HEK293 (cell line): ENCODE measurements at regions of chr11 and their contacts with region 1.

Region 1: GRCh38 chr11:9460322-9461067 is at the start of gene ZNF143:
- H3K4me3 ChIP-seq: peak within 1 kb of the TSS; percentile 93
- H3K27ac ChIP-seq: peak within 1 kb of the TSS; percentile 88
- H3K4me1 ChIP-seq: no peaks in the 10 kb centered on the region
- CTCF ChIP-seq: no peak

Region 2: GRCh38 chr11:9473408-9473807 is 12.9 kb after region 1 on chr11:
- CTCF ChIA-PET with region 1: interaction called, 4 read pairs
- POLR2A ChIA-PET with region 1: interaction called, 29 read pairs
- H3K4me3 ChIP-seq: no peak overlapping the region
- H3K27ac ChIP-seq: no peak overlapping the region
- H3K4me1 ChIP-seq: no peaks in the 10 kb centered on the region
- CTCF ChIP-seq: no peak

Region 3: GRCh38 chr11:9506489-9507276 is 46.2 kb after region 1 on chr11:
- CTCF ChIA-PET with region 1: interaction called, 6 read pairs
- POLR2A ChIA-PET with region 1: interaction called, 11 read pairs
- H3K4me3 ChIP-seq: no peak overlapping the region
- H3K27ac ChIP-seq: no peak overlapping the region
- H3K4me1 ChIP-seq: no peaks in the 10 kb centered on the region
- CTCF ChIP-seq: peak; percentile 48; the same call in 1 of the 2 replicates

Region 4: DNA sequence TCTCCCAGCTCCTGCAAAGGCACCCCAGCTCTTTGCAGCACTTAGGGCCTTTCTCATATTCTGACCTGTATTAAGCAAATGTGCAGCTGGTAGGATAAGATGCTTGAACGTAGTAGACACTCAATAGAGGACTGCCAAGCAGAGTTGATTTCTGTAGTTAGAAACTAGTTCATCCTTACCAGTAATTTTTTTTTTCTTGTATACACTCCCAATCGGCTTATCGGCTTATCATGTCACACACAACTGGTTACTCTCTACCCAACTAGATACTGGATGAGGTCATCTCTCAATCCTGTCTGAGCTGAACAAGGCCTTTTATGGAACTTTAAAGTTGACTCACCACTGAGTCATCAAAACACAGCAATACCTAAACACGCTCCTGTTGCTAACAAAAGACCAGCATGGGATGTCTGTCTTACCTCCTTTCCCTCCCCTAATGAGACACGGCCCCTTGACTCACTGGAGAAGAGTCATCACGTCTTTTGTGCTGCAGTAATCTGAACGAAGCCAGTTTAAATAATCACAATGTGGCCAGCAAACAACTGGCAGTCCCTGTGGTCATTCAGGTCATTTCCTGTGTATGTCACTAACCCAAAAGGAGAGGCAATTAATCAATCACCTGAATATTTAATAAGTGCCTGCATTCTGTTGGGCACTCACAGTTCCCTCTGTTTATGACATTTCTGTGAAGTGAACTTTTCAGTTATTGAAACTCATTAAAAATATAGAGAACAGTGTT is 105.5 kb after region 1 on chr11:
- CTCF ChIA-PET with region 1: interaction called, 3 read pairs
- POLR2A ChIA-PET with region 1: interaction called, 10 read pairs
- H3K4me3 ChIP-seq: no peak overlapping the region
- H3K27ac ChIP-seq: peak overlapping the region; percentile 66
- H3K4me1 ChIP-seq: peaks cover 6% of the 10 kb centered on the region; the same call in 1 of the 2 replicates
- CTCF ChIP-seq: no peak

Region 5: GRCh38 chr11:9573052-9573774 is 112.7 kb after region 1 on chr11 and contains the start of gene WEE1:
- CTCF ChIA-PET with region 1: no interaction called
- POLR2A ChIA-PET with region 1: interaction called, 29 read pairs
- H3K4me3 ChIP-seq: peak within 1 kb of the TSS; percentile 100
- H3K27ac ChIP-seq: peak within 1 kb of the TSS; percentile 98
- H3K4me1 ChIP-seq: no peaks in the 10 kb centered on the region
- CTCF ChIP-seq: 0 out of 2 replicates have a peak, but pooled peaks have one; percentile 11